ENCODE measurements at regions of chr7 and their contacts with region 1.

Region 1: GRCh38 chr7:25565949-25566348 is 337.7 kb upstream of the NPVF start:
- DNase-seq: peak; percentile 76
- H3K4me3 Mint-ChIP-seq: no peak overlapping the region
- H3K27ac Mint-ChIP-seq: no peak overlapping the region
- H3K4me1 Mint-ChIP-seq: peaks cover 2% of the 10 kb centered on the region
- H3K27me3 Mint-ChIP-seq: peaks cover 3% of the 10 kb centered on the region

Region 2: DNA sequence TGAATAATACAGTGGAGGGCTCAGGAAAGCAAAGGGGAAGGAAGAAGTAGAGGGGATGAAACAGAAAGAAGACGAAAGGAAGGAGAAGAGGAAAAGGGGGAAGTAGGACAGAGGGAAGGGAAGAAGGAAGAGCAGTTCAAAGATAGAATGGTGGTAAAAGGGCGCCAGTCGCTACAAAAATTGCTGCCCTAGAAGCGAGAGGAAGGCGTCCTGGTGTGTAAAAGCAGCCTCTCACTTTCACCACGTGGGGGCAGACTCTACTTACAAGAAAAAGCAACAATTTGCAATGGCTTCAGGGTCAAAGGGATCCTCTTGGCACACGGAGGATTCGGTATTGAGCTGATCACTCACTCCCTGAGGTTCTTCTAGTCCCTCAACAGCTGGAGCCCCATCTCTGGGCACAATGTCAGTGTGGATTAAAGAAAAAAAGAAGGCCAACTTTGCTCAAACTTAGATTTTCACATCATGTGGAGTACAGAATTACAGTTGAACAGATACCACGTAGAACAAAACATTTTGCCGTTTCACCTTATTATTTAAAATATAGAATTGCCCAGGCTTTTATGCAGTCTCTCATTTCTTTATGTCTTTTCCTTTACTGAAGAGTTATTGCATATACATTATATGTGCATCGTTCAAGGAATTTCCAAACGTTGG is 306.2 kb before region 1 on chr7:
- CTCF ChIA-PET with region 1: interaction called, 180 read pairs
- POLR2A ChIA-PET with region 1: no interaction called
- intact Hi-C with region 1: loop called (anchors 1 kb)
- DNase-seq: peak; percentile 75
- H3K4me3 Mint-ChIP-seq: no peak overlapping the region
- H3K27ac Mint-ChIP-seq: no peak overlapping the region
- H3K4me1 Mint-ChIP-seq: peaks cover 21% of the 10 kb centered on the region
- H3K27me3 Mint-ChIP-seq: peaks cover 6% of the 10 kb centered on the region

Region 3: GRCh38 chr7:25389489-25390106 is 176.4 kb before region 1 on chr7:
- CTCF ChIA-PET with region 1: interaction called, 24 read pairs
- POLR2A ChIA-PET with region 1: no interaction called
- intact Hi-C with region 1: loop called (anchors 1 kb)
- DNase-seq: no peak
- H3K4me3 Mint-ChIP-seq: no peak overlapping the region
- H3K27ac Mint-ChIP-seq: no peak overlapping the region
- H3K4me1 Mint-ChIP-seq: no peaks in the 10 kb centered on the region
- H3K27me3 Mint-ChIP-seq: peaks cover 9% of the 10 kb centered on the region

Region 4: GRCh38 chr7:25578991-25579777 is 13.2 kb after region 1 on chr7:
- CTCF ChIA-PET with region 1: interaction called, 21 read pairs
- POLR2A ChIA-PET with region 1: no interaction called
- intact Hi-C with region 1: no loop called
- DNase-seq: no peak
- H3K4me3 Mint-ChIP-seq: no peak overlapping the region
- H3K27ac Mint-ChIP-seq: no peak overlapping the region
- H3K4me1 Mint-ChIP-seq: no peaks in the 10 kb centered on the region
- H3K27me3 Mint-ChIP-seq: no peaks in the 10 kb centered on the region

Region 5: GRCh38 chr7:25586513-25586912 is 20.6 kb after region 1 on chr7:
- CTCF ChIA-PET with region 1: interaction called, 10 read pairs
- POLR2A ChIA-PET with region 1: no interaction called
- intact Hi-C with region 1: no loop called
- DNase-seq: no peak
- H3K4me3 Mint-ChIP-seq: no peak overlapping the region
- H3K27ac Mint-ChIP-seq: no peak overlapping the region
- H3K4me1 Mint-ChIP-seq: no peaks in the 10 kb centered on the region
- H3K27me3 Mint-ChIP-seq: peaks cover 3% of the 10 kb centered on the region

Region 6: GRCh38 chr7:25600262-25600920 is 34.4 kb after region 1 on chr7:
- CTCF ChIA-PET with region 1: no interaction called
- POLR2A ChIA-PET with region 1: no interaction called
- intact Hi-C with region 1: no loop called
- DNase-seq: no peak
- H3K4me3 Mint-ChIP-seq: no peak overlapping the region
- H3K27ac Mint-ChIP-seq: no peak overlapping the region
- H3K4me1 Mint-ChIP-seq: no peaks in the 10 kb centered on the region
- H3K27me3 Mint-ChIP-seq: peaks cover 3% of the 10 kb centered on the region

Region 7: GRCh38 chr7:25851332-25852210 is 285.6 kb after region 1 on chr7:
- CTCF ChIA-PET with region 1: interaction called, 26 read pairs
- POLR2A ChIA-PET with region 1: no interaction called
- intact Hi-C with region 1: loop called (anchors 1 kb)
- DNase-seq: peak; percentile 78
- H3K4me3 Mint-ChIP-seq: peak overlapping the region; percentile 65
- H3K27ac Mint-ChIP-seq: no peak overlapping the region
- H3K4me1 Mint-ChIP-seq: peaks cover 11% of the 10 kb centered on the region
- H3K27me3 Mint-ChIP-seq: peaks cover 51% of the 10 kb centered on the region